Right ventricle myocardium superior (tissue), 1 donor: ENCODE measurements at regions of chr5 and their contacts with region 1.

Region 1: DNA sequence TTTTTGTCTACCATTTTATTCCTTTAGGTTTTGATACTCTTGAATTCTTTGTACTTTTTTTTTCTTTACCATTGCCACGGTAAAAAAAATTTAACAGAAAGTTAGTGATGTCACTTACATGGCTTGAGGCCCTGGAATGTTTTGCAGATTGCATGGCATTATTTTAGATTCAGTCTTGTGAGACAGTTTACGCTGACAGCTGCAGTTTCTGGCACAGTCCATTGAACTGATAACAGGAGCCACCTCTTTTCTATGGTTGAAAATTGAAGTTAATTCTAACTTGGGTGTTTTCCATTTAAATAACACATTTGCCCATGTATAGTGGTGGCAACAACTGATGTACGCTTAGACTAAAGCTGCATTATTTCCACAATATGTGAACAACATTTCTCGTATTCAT is 1028.5 kb downstream of the CDH18 start:
- DNase-seq: no peak
- ATAC-seq: no peak

Region 2: GRCh38 chr5:18944771-18945170 is 14.8 kb before region 1 on chr5:
- intact Hi-C with region 1: loop called (anchors 2 kb)
- DNase-seq: no peak
- ATAC-seq: no peak

Region 3: GRCh38 chr5:19018822-19019221 is 59.3 kb after region 1 on chr5:
- intact Hi-C with region 1: no loop called
- DNase-seq: no peak
- ATAC-seq: no peak